K562 (cell line): ENCODE measurements at regions of chr2 and their contacts with region 1.

Region 1: GRCh38 chr2:210617732-210618330 is 61.4 kb downstream of the CPS1 start:
- DNase-seq: peak; percentile 9 to 19 (median 14)
- ATAC-seq: no peak
- H3K4me3 ChIP-seq: no peak overlapping the region
- H3K27ac ChIP-seq: no peak overlapping the region
- H3K4me1 ChIP-seq: no peaks in the 10 kb centered on the region
- H3K27me3 ChIP-seq: no peaks in the 10 kb centered on the region
- CTCF ChIP-seq: peak in 2 of 3 experiments; percentile 28 to 39; a peak in 2 of 6 replicates
- EP300 ChIP-seq: no peak
- POLR2A ChIP-seq: no peak
- RAD21 ChIP-seq: peak; percentile 47 to 50

Region 2: DNA sequence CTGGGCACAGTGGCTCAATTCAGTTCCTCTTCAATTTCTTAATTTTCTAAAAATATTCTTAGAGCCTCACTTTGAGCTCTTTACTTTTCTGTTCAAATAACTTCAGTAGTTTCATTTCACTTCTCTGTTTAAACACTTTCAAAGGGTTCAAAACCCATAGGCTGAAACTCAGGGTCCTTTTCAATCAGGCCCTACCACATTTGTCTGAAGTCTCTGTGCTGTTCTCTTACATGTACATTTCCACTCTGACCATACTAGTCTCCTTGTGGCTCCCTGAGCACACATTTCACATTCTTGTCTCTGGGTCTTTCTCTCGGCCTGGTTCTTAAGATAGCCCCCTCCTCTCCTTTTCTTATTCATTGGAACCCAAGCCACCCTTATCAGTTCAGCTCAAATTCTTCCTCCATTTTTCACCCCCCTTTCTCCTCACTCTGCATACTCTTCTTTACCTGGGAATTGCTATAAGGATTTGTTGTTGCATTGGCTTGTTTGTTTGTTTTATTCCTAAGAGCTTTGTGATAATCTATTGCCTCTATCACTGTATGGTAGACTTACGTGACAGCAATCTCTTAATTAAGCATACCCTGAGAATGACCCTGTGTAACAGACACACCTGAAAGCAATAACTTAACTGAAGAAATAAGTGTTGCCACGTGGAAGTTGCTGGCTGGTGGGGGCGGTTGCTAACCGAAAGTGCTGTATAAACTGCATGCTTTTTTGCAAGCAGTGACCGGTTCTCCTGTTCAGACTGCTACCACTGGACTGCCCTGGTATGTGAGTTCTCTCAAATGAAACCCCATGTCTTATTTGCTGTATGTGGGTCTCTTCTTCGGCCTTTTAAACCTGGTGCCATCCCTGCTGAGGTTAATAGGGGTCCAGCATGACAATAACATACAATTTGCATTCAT is 364.9 kb before region 1 on chr2:
- CTCF ChIA-PET with region 1: no interaction called
- POLR2A ChIA-PET with region 1: no interaction called
- in situ Hi-C with region 1: no loop called
- intact Hi-C with region 1: no loop called
- DNase-seq: no peak
- ATAC-seq: no peak
- H3K4me3 ChIP-seq: no peak overlapping the region
- H3K27ac ChIP-seq: no peak overlapping the region
- H3K4me1 ChIP-seq: no peaks in the 10 kb centered on the region
- H3K27me3 ChIP-seq: no peaks in the 10 kb centered on the region
- CTCF ChIP-seq: no peak
- EP300 ChIP-seq: no peak
- POLR2A ChIP-seq: no peak
- RAD21 ChIP-seq: no peak

Region 3: GRCh38 chr2:210593166-210593565 is 24.7 kb before region 1 on chr2:
- CTCF ChIA-PET with region 1: no interaction called
- POLR2A ChIA-PET with region 1: no interaction called
- in situ Hi-C with region 1: no loop called
- intact Hi-C with region 1: no loop called
- DNase-seq: no peak
- ATAC-seq: no peak
- H3K4me3 ChIP-seq: no peak overlapping the region
- H3K27ac ChIP-seq: no peak overlapping the region
- H3K4me1 ChIP-seq: no peaks in the 10 kb centered on the region
- H3K27me3 ChIP-seq: no peaks in the 10 kb centered on the region
- CTCF ChIP-seq: no peak
- EP300 ChIP-seq: no peak
- POLR2A ChIP-seq: no peak
- RAD21 ChIP-seq: no peak

Region 4: GRCh38 chr2:211157856-211158463 is 540.1 kb after region 1 on chr2:
- CTCF ChIA-PET with region 1: no interaction called
- POLR2A ChIA-PET with region 1: no interaction called
- in situ Hi-C with region 1: no loop called
- intact Hi-C with region 1: loop called (anchors 2 kb)
- DNase-seq: peak; percentile 6 to 63 (median 18)
- ATAC-seq: peak; percentile 75
- H3K4me3 ChIP-seq: no peak overlapping the region
- H3K27ac ChIP-seq: no peak overlapping the region
- H3K4me1 ChIP-seq: no peaks in the 10 kb centered on the region
- H3K27me3 ChIP-seq: no peaks in the 10 kb centered on the region
- CTCF ChIP-seq: peak in 2 of 3 experiments; percentile 49 to 52; a peak in 3 of 6 replicates
- EP300 ChIP-seq: no peak
- POLR2A ChIP-seq: no peak
- RAD21 ChIP-seq: peak; percentile 25 to 53; a peak in 3 of 4 replicates